ENCODE measurements at regions of chr16 and their contacts with region 1.

Region 1: GRCh38 chr16:23435500-23435899 is 17.5 kb downstream of the COG7 start:
- DNase-seq: peak; percentile 15
- ATAC-seq: peak; percentile 100
- H3K4me3 ChIP-seq: no peak overlapping the region
- H3K27ac ChIP-seq: no peak overlapping the region
- H3K4me1 ChIP-seq: no peaks in the 10 kb centered on the region
- H3K27me3 ChIP-seq: no peaks in the 10 kb centered on the region
- CTCF ChIP-seq: peak; percentile 89 to 93 (median 91)
- EP300 ChIP-seq: no peak
- POLR2A ChIP-seq: no peak
- RAD21 ChIP-seq: peak; percentile 72

Region 2: DNA sequence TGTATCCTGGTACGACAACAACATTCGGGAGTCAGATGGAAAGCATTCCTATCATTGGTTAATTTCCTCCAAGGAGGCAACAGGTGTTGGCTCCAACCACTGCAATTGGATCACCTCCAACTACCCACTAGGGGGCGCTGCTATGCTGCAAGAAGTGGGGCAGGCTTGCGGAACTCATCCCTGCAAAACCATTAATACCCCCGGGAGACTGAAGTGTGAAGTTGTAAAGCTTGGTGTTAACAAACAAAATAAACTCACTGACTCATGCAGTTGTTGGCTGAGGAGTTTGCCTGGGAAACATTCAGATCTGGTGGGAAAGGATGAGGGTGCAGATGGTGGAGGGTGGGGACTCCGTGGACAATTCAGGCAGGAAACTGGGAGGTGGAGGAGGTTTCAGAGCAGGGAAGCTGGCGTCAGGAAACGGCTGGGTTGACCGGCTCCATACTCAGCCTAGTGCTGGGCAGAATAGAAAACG is 536.6 kb before region 1 on chr16:
- CTCF ChIA-PET with region 1: interaction called, 4 read pairs
- POLR2A ChIA-PET with region 1: no interaction called
- RAD21 ChIA-PET with region 1: no interaction called
- SMC1A ChIA-PET with region 1: no interaction called
- in situ Hi-C with region 1: no loop called
- intact Hi-C with region 1: loop called (anchors 2 kb)
- DNase-seq: peak; percentile 1
- ATAC-seq: peak; percentile 60
- H3K4me3 ChIP-seq: no peak overlapping the region
- H3K27ac ChIP-seq: no peak overlapping the region
- H3K4me1 ChIP-seq: no peaks in the 10 kb centered on the region
- H3K27me3 ChIP-seq: peaks cover 2 to 3% of the 10 kb centered on the region in 2 experiments; a peak in 1 of 4 replicates
- CTCF ChIP-seq: peak; percentile 45 to 65 (median 55)
- EP300 ChIP-seq: no peak
- POLR2A ChIP-seq: no peak
- RAD21 ChIP-seq: peak; percentile 46

Region 3: DNA sequence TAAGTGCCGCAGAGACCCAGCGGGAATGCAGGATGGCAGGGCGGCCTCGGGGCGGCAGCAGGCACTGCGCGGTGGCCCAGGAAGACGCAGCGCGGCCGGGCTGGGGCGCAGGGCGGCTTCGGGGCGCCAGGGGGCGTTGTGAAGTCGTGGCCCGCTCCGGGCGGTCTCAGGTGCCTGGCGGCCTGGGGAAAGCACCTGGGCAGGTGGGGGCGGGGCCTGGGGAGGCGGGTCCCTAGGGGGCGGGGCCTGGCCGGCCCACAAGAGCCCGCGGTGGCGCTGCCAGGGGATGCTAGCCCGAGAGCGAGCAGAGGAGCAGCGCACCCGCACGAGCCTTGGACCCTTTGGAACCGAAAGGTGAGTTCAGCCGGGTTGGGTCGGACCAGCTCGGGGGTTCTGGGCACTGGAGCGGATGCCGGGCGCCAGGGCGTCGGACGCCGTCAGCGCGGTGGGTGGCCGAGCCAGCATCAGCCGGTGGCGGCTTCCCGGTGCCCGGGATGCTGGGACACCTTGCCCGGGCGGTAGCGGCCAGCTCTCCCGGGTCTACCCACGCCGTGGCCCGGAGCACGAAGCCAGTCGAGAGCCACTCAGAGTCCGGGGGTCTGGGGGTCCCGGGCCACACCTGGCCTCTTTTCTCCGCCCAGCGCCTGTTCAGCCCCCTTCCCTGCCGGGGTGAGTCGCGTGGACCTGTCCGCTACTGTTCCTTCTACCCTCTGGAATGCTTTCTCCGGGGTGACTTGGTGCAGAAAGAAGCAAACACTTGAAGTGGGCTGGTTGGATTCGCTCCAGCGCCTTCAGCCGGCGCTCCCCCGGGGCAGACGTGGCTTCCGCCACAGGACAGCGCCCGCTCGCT is 252.8 kb before region 1 on chr16 and contains the start of gene SCNN1G:
- CTCF ChIA-PET with region 1: interaction called, 470 read pairs
- POLR2A ChIA-PET with region 1: interaction called, 3 read pairs
- RAD21 ChIA-PET with region 1: interaction called, 159 read pairs
- SMC1A ChIA-PET with region 1: interaction called, 189 read pairs
- in situ Hi-C with region 1: loop called (anchors 5 kb)
- intact Hi-C with region 1: loop called (anchors 1 kb)
- DNase-seq: peak; percentile 23
- ATAC-seq: peak; percentile 98
- H3K4me3 ChIP-seq: no peak within 1 kb of the TSS
- H3K27ac ChIP-seq: no peak within 1 kb of the TSS
- H3K4me1 ChIP-seq: peaks cover 7% of the 10 kb centered on the region
- H3K27me3 ChIP-seq: peaks cover 3 to 7% of the 10 kb centered on the region in 2 experiments; a peak in 3 of 4 replicates
- CTCF ChIP-seq: peak; percentile 95 to 98 (median 96); a peak in 5 of 6 replicates
- EP300 ChIP-seq: no peak
- POLR2A ChIP-seq: no peak
- RAD21 ChIP-seq: peak; percentile 95
- polyA plus RNA-seq, gene SCNN1G: 0.05 TPM in 1 of 2 experiments, not detected in the other

Region 4: DNA sequence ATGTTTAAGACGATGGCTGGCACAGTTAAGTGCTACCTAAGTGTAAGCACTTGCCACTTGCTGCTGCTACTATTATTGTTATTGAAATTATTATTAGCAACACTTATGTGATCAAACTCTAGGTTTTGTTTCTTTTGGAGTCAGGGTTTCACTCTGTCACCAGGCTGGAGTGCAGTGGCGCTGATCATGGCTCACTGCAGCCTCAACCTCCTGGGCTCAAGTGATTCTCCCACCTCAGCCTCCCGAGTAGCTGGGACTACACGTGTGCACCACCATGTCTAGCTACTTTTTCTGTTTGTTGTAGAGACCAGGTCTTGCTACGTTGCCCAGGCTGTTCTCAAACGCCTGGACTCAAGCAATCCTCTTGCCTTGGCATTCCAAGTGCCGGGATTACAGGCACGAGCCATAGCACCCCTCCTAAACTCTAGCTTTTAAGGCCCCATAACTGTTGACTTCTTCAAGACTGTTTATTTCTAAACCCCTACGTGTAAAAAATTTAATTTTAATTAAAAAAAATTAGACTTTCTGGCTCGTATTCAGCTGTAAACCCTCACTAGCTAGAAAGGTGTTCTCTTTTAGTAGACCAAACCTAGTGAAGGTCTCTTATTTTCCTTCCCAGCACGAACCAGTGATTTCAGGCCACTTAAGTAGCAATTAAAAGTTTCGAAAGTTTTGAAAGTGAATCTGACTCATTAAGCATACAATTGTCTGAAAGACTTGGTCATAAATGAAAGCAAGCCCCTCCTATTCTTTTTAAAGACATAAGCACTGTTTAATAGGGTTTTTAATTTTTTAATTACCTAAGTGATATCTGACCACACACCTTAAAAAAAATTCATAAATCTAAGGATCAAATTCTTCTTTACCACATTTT is 145.1 kb before region 1 on chr16:
- CTCF ChIA-PET with region 1: interaction called, 83 read pairs
- POLR2A ChIA-PET with region 1: no interaction called
- RAD21 ChIA-PET with region 1: interaction called, 4 read pairs
- SMC1A ChIA-PET with region 1: interaction called, 59 read pairs
- in situ Hi-C with region 1: no loop called
- intact Hi-C with region 1: no loop called
- DNase-seq: no peak
- ATAC-seq: peak; percentile 77
- H3K4me3 ChIP-seq: no peak overlapping the region
- H3K27ac ChIP-seq: no peak overlapping the region
- H3K4me1 ChIP-seq: peaks cover 15% of the 10 kb centered on the region
- H3K27me3 ChIP-seq: no peaks in the 10 kb centered on the region
- CTCF ChIP-seq: no peak
- EP300 ChIP-seq: peak in 1 of 2 experiments; percentile 39; a peak in 1 of 4 replicates
- POLR2A ChIP-seq: no peak
- RAD21 ChIP-seq: no peak

Region 5: GRCh38 chr16:23334457-23334853 is 101.0 kb before region 1 on chr16:
- CTCF ChIA-PET with region 1: interaction called, 80 read pairs
- POLR2A ChIA-PET with region 1: no interaction called
- RAD21 ChIA-PET with region 1: interaction called, 47 read pairs
- SMC1A ChIA-PET with region 1: interaction called, 50 read pairs
- in situ Hi-C with region 1: no loop called
- intact Hi-C with region 1: loop called (anchors 10 kb)
- DNase-seq: peak; percentile 93
- ATAC-seq: peak; percentile 68
- H3K4me3 ChIP-seq: 0 out of 2 replicates have a peak overlapping the region, but pooled peaks have one; percentile 5
- H3K27ac ChIP-seq: peak overlapping the region; percentile 57
- H3K4me1 ChIP-seq: peaks cover 31% of the 10 kb centered on the region
- H3K27me3 ChIP-seq: no peaks in the 10 kb centered on the region
- CTCF ChIP-seq: no peak
- EP300 ChIP-seq: peak; percentile 56 to 58; a peak in 2 of 4 replicates
- POLR2A ChIP-seq: no peak
- RAD21 ChIP-seq: no peak

Region 6: DNA sequence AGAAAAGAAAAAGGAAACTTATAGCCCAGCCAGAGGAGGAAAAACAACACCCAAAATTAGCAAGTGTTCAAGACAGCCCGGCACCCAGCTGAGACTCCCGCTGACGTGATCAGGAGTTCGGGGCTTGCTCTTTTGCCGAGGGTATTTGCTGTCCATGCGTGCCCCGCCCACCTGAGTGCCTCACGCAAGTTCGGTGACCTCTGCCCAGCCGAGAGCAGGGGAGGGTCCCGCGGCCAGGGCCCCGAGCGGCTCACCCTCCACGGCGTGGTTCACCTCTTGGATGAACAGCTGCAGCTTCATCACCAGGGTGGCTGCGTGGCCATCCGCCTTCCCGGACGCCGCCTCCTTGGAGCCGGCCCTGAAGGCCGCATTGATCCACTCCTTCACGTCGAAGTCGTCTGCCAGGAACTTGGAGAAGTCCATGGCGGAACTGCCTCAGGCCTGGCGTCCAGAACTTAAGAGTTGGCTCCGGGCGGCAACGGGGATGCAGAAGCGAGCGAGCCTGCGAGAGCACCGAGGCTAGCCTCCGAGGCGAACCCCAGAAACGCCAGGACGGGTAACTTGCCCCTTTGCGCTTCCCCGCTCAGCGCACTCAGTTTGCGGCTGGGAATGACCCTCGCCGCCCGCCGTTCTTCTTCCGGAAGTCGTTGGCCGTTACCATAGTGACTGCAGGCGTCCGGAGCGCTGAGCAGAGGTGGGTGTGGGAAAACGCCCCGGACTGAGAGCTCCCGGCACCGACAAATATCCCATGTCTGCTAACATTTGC is 17.3 kb after region 1 on chr16 and contains the start of gene COG7:
- CTCF ChIA-PET with region 1: interaction called, 32 read pairs
- POLR2A ChIA-PET with region 1: no interaction called
- RAD21 ChIA-PET with region 1: interaction called, 4 read pairs
- SMC1A ChIA-PET with region 1: interaction called, 8 read pairs
- in situ Hi-C with region 1: no loop called
- intact Hi-C with region 1: no loop called
- DNase-seq: peak; percentile 32
- ATAC-seq: peak; percentile 96
- H3K4me3 ChIP-seq: peak within 1 kb of the TSS; percentile 79
- H3K27ac ChIP-seq: peak within 1 kb of the TSS; percentile 58
- H3K4me1 ChIP-seq: 0 out of 2 replicates have a peak, but pooled peaks cover 4% of the 10 kb centered on the region
- H3K27me3 ChIP-seq: no peaks in the 10 kb centered on the region
- CTCF ChIP-seq: no peak
- EP300 ChIP-seq: no peak
- POLR2A ChIP-seq: peak; percentile 72
- RAD21 ChIP-seq: no peak
- polyA plus RNA-seq, gene COG7: 2.9 to 7.5 TPM

Region 7: DNA sequence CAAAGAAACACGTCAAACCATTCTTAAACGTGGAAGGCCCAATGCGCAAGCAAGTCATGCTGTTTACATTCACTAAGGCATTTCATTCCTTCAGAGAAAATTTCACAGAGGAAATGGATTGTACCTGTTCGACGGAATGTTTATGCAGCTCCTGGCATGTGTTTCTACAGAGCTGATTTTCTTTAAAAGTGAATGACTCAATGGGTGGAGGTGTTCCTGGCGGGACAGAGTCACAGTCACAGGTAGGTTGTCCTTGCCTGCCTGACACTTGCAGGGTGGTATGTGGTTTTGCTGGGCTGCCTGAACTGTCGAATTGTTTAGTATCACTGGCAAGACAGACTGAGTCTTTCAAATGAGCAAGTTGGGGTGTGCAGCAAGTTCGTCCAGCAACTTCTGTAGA is 194.0 kb after region 1 on chr16:
- CTCF ChIA-PET with region 1: no interaction called
- POLR2A ChIA-PET with region 1: no interaction called
- RAD21 ChIA-PET with region 1: no interaction called
- SMC1A ChIA-PET with region 1: no interaction called
- in situ Hi-C with region 1: no loop called
- intact Hi-C with region 1: no loop called
- DNase-seq: no peak
- ATAC-seq: no peak
- H3K4me3 ChIP-seq: no peak overlapping the region
- H3K27ac ChIP-seq: no peak overlapping the region
- H3K4me1 ChIP-seq: no peaks in the 10 kb centered on the region; the same call in 1 of the 2 replicates
- H3K27me3 ChIP-seq: no peaks in the 10 kb centered on the region
- CTCF ChIP-seq: no peak
- EP300 ChIP-seq: no peak
- POLR2A ChIP-seq: no peak
- RAD21 ChIP-seq: no peak

Region 8: GRCh38 chr16:24088767-24089166 is 653.3 kb after region 1 on chr16:
- CTCF ChIA-PET with region 1: no interaction called
- POLR2A ChIA-PET with region 1: no interaction called
- RAD21 ChIA-PET with region 1: no interaction called
- SMC1A ChIA-PET with region 1: no interaction called
- in situ Hi-C with region 1: no loop called
- intact Hi-C with region 1: no loop called
- DNase-seq: no peak
- ATAC-seq: no peak
- H3K4me3 ChIP-seq: no peak overlapping the region
- H3K27ac ChIP-seq: no peak overlapping the region
- H3K4me1 ChIP-seq: no peaks in the 10 kb centered on the region
- H3K27me3 ChIP-seq: no peaks in the 10 kb centered on the region
- CTCF ChIP-seq: no peak
- EP300 ChIP-seq: no peak
- POLR2A ChIP-seq: no peak
- RAD21 ChIP-seq: no peak